CD8-positive, alpha-beta memory T cell (primary cell): ENCODE measurements at regions of chr1 and their contacts with region 1.

Region 1: GRCh38 chr1:10514490-10515235 is 39.9 kb downstream of the PEX14 start:
- DNase-seq: peak in 2 of 5 donors; percentile 21 to 59
- H3K4me3 ChIP-seq: no peak overlapping the region
- H3K4me3 Mint-ChIP-seq: peak overlapping the region; percentile 8 to 68 (median 45)
- H3K27ac ChIP-seq: no peak overlapping the region
- H3K27ac Mint-ChIP-seq: peak overlapping the region; percentile 77 to 96 (median 90)
- H3K4me1 ChIP-seq: peaks cover 75% of the 10 kb centered on the region
- H3K4me1 Mint-ChIP-seq: peaks cover 80 to 94% (median 91%) of the 10 kb centered on the region in 3 donors
- H3K27me3 ChIP-seq: no peaks in the 10 kb centered on the region
- H3K27me3 Mint-ChIP-seq: no peaks in the 10 kb centered on the region

Region 2: DNA sequence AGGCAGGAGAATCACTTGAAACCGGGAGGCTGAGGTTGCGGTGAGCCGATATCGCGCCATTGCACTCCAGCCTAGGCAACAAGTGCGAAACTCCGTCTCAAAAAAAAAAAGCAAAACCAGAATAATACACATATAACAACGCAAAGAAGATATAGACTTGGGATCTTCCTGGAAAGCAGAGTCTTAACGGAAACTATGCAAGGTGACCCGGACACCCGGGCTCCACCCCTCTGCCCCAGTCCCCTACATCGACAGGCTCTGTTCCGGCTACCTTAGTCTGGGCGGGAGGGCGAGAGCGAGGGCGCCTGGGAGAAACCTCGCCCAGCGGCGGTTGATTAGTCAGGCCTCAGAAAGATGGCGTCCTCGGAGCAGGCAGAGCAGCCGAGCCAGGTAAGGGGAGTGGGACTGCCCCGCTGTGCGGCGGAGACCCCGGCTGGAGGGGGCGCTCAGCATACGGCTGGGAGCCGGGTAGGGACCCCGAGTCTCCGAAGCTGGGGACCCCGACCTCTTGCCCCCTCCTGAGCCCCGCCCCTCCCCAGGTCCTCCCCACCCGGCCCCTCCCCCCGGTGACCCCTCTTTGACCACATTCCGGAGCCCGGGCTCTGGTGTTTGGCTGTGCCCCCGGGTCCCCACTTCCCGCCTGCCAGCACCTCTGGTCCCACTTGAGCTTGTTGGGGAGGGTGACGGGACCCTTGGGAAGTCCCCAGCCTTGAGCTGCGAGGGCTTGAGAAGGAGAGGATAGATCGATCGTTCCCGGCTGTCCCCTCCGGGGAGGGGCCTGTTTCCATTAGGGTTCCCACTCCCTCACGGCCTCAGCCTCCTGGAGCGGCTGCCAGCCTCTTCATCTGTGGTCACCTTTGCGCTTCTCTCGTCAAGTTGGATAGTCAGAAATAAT is 39.8 kb before region 1 on chr1 and contains the start of gene PEX14:
- CTCF ChIA-PET with region 1: no interaction called
- POLR2A ChIA-PET with region 1: no interaction called
- DNase-seq: peak; percentile 73 to 88 (median 77)
- H3K4me3 ChIP-seq: peak within 1 kb of the TSS; percentile 81
- H3K4me3 Mint-ChIP-seq: peak within 1 kb of the TSS; percentile 89 to 97 (median 93)
- H3K27ac ChIP-seq: peak within 1 kb of the TSS; percentile 74
- H3K27ac Mint-ChIP-seq: peak within 1 kb of the TSS; percentile 82 to 95 (median 92)
- H3K4me1 ChIP-seq: peaks cover 29% of the 10 kb centered on the region
- H3K4me1 Mint-ChIP-seq: peaks cover 49 to 65% (median 55%) of the 10 kb centered on the region in 3 donors
- H3K27me3 ChIP-seq: no peaks in the 10 kb centered on the region
- H3K27me3 Mint-ChIP-seq: peaks cover 0 to 2% of the 10 kb centered on the region in 2 donors
- total RNA-seq, gene PEX14: 18.2 to 22.2 TPM

Region 3: DNA sequence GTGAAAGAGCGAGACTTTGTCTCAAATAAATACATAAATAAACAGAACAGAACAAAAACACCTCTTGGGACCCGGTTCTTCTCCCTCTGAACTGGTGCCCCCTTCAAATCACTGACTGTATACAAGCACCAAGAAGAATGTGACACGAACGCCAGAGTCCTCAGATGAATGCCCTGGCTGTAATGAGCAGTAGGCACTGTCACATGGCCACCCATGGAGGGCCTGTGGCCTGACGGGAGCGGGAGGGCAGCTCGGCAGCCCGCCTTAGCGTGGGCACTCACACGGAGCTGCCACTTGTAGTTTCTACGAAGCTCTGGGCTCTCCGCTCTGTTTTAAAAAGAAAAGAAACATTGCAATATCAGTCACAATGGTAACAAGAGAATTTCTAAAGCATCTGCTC is 106.1 kb after region 1 on chr1:
- CTCF ChIA-PET with region 1: no interaction called
- POLR2A ChIA-PET with region 1: no interaction called
- DNase-seq: no peak
- H3K4me3 ChIP-seq: no peak overlapping the region
- H3K4me3 Mint-ChIP-seq: no peak overlapping the region
- H3K27ac ChIP-seq: no peak overlapping the region
- H3K27ac Mint-ChIP-seq: no peak overlapping the region
- H3K4me1 ChIP-seq: no peaks in the 10 kb centered on the region
- H3K4me1 Mint-ChIP-seq: no peaks in the 10 kb centered on the region
- H3K27me3 ChIP-seq: no peaks in the 10 kb centered on the region
- H3K27me3 Mint-ChIP-seq: no peaks in the 10 kb centered on the region

Region 4: DNA sequence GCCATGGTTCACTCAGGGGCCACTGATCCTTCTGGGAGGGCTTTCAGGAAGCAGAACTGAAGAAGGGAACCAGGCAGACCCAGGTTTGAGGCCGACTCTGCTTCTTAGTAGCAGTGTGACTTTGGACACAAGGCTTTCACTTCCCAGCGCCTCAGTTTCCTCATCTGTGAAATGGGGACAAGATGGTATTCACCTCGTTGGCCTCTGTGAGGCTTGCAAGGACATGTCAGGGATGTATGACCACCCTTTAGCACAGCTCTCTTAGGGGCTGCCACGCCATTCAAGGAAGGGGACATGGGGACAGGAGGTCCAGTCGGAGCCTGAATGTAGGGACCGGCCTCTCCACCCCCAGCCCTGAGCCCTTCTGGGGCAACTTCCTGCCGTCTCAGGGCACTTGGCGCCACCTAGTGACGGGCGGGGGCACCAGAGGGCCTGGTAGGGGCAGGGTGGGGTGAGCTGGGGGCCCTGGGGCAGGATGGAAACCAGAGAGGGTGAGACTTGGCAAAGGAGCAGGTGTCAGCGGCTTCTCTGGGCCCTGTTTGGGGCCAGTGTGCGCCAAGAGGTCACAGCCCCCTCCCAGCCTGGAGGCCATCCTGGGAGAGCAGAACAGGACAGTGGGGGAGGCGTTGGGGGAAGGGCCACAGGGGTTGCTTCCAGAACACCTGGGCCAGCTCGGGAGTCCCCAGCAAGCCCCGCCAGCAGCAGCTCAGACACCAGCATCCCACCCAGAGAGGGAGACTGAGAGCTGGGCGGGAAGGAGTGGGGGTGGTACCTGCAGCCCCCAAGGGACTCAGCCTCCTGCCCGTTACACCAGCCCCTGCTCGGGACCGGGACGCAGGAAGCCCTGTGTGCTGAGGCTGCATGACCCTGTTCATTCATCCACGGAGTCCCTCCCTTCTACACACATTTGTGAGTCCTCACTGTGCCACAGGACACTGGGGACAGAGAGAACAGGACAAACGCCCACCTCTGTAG is 395.3 kb after region 1 on chr1:
- CTCF ChIA-PET with region 1: interaction called, 10 read pairs
- POLR2A ChIA-PET with region 1: interaction called, 4 read pairs
- DNase-seq: peak; percentile 63 to 84 (median 72)
- H3K4me3 ChIP-seq: no peak overlapping the region
- H3K4me3 Mint-ChIP-seq: no peak overlapping the region
- H3K27ac ChIP-seq: no peak overlapping the region
- H3K27ac Mint-ChIP-seq: peak overlapping the region in 1 of 8 donors; percentile 82
- H3K4me1 ChIP-seq: peaks cover 21% of the 10 kb centered on the region
- H3K4me1 Mint-ChIP-seq: peaks cover 7 to 19% (median 13%) of the 10 kb centered on the region in 3 donors
- H3K27me3 ChIP-seq: no peaks in the 10 kb centered on the region
- H3K27me3 Mint-ChIP-seq: peaks cover 3 to 5% of the 10 kb centered on the region in 2 donors